ENCODE measurements at regions of chr4 and their contacts with region 1.

Region 1: GRCh38 chr4:163554870-163555465 is 60.5 kb downstream of the TMA16 start:
- DNase-seq: peak in 2 of 3 donors; percentile 52 to 67
- H3K4me3 ChIP-seq: no peak overlapping the region
- H3K27ac ChIP-seq: no peak overlapping the region
- H3K4me1 ChIP-seq: peaks cover 14 to 31% (median 21%) of the 10 kb centered on the region in 4 experiments
- H3K27me3 ChIP-seq: no peaks in the 10 kb centered on the region

Region 2: DNA sequence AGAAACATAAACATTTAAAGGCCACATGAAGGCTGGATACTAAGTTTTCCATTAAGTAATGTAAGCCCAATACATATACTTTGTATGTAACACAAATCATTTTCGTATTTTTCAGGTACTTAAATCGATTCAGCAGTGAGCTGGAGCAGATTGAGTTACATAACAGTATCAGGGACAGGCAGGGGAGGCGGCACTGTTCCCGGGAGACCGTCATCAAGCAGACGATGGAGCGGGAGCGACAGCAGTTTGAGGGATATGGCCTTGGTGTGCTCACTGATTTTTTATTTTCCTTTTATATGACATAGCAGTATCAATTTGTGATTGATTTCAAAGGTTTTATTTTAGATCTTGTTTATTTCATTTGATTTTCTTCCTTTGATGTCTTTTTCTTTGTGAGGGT is 39.8 kb before region 1 on chr4:
- CTCF ChIA-PET with region 1: no interaction called
- POLR2A ChIA-PET with region 1: no interaction called
- DNase-seq: no peak
- H3K4me3 ChIP-seq: no peak overlapping the region
- H3K27ac ChIP-seq: no peak overlapping the region
- H3K4me1 ChIP-seq: no peaks in the 10 kb centered on the region
- H3K27me3 ChIP-seq: no peaks in the 10 kb centered on the region

Region 3: GRCh38 chr4:163663454-163664225 is 108.7 kb after region 1 on chr4:
- CTCF ChIA-PET with region 1: interaction called, 21 read pairs
- POLR2A ChIA-PET with region 1: no interaction called
- DNase-seq: peak in 1 of 3 donors; percentile 9
- H3K4me3 ChIP-seq: no peak overlapping the region
- H3K27ac ChIP-seq: no peak overlapping the region
- H3K4me1 ChIP-seq: peaks cover 9 to 37% (median 25%) of the 10 kb centered on the region in 4 experiments
- H3K27me3 ChIP-seq: no peaks in the 10 kb centered on the region

Region 4: GRCh38 chr4:163694385-163694784 is 139.4 kb after region 1 on chr4:
- CTCF ChIA-PET with region 1: interaction called, 14 read pairs
- POLR2A ChIA-PET with region 1: no interaction called
- DNase-seq: no peak
- H3K4me3 ChIP-seq: no peak overlapping the region
- H3K27ac ChIP-seq: no peak overlapping the region
- H3K4me1 ChIP-seq: peaks cover 0 to 2% (median 0%) of the 10 kb centered on the region in 4 experiments
- H3K27me3 ChIP-seq: no peaks in the 10 kb centered on the region

Region 5: GRCh38 chr4:163755013-163755412 is 200.0 kb after region 1 on chr4:
- CTCF ChIA-PET with region 1: interaction called, 69 read pairs
- POLR2A ChIA-PET with region 1: no interaction called
- DNase-seq: peak; percentile 15 to 55 (median 33)
- H3K4me3 ChIP-seq: no peak overlapping the region
- H3K27ac ChIP-seq: no peak overlapping the region
- H3K4me1 ChIP-seq: no peaks in the 10 kb centered on the region
- H3K27me3 ChIP-seq: no peaks in the 10 kb centered on the region

Measured in common myeloid progenitor, CD34-positive (primary cell).